CD14-positive monocyte (primary cell): ENCODE measurements at regions of chr16 and their contacts with region 1.

Region 1: GRCh38 chr16:2459647-2460390 is at the start of gene TEDC2:
- DNase-seq: peak; percentile 90 to 94 (median 91)
- H3K4me3 ChIP-seq: peak within 1 kb of the TSS; percentile 49 to 88 (median 60)
- H3K4me3 Mint-ChIP-seq: peak within 1 kb of the TSS; percentile 90 to 92
- H3K27ac ChIP-seq: no peak within 1 kb of the TSS
- H3K27ac Mint-ChIP-seq: peak within 1 kb of the TSS in 5 of 7 donors; percentile 65 to 91 (median 85)
- H3K4me1 ChIP-seq: peaks cover 13 to 32% of the 10 kb centered on the region in 2 donors
- H3K4me1 Mint-ChIP-seq: peaks cover 19% of the 10 kb centered on the region
- H3K27me3 ChIP-seq: no peaks in the 10 kb centered on the region
- H3K27me3 Mint-ChIP-seq: no peaks in the 10 kb centered on the region
- CTCF ChIP-seq: no peak
- polyA plus RNA-seq, gene TEDC2: 0.28 TPM in 1 of 3 donors, not detected in the others

Region 2: GRCh38 chr16:2429034-2429770 is 30.6 kb before region 1 on chr16 and contains the start of gene CCNF:
- intact Hi-C with region 1: loop called in 1 of 2 experiments (anchors 5 kb)
- DNase-seq: peak; percentile 92 to 95 (median 94)
- H3K4me3 ChIP-seq: peak within 1 kb of the TSS; percentile 74 to 94 (median 92)
- H3K4me3 Mint-ChIP-seq: peak within 1 kb of the TSS; percentile 84 to 94
- H3K27ac ChIP-seq: peak within 1 kb of the TSS in 1 of 2 donors; percentile 10
- H3K27ac Mint-ChIP-seq: peak within 1 kb of the TSS in 4 of 7 donors; percentile 17 to 68 (median 32)
- H3K4me1 ChIP-seq: peaks cover 20 to 28% of the 10 kb centered on the region in 2 donors
- H3K4me1 Mint-ChIP-seq: peaks cover 31% of the 10 kb centered on the region
- H3K27me3 ChIP-seq: no peaks in the 10 kb centered on the region
- H3K27me3 Mint-ChIP-seq: peaks cover 0 to 2% (median 0%) of the 10 kb centered on the region in 3 donors
- CTCF ChIP-seq: no peak
- polyA plus RNA-seq, gene CCNF: 0.34 to 0.97 (median 0.68) TPM

Region 3: GRCh38 chr16:2486645-2487516 is 27.1 kb after region 1 on chr16:
- intact Hi-C with region 1: no loop called
- DNase-seq: peak; percentile 79 to 88 (median 79)
- H3K4me3 ChIP-seq: peak overlapping the region in 1 of 3 experiments; percentile 10
- H3K4me3 Mint-ChIP-seq: peak overlapping the region; percentile 66 to 86
- H3K27ac ChIP-seq: peak overlapping the region; percentile 2 to 28
- H3K27ac Mint-ChIP-seq: peak overlapping the region; percentile 80 to 93 (median 90)
- H3K4me1 ChIP-seq: peaks cover 29 to 33% of the 10 kb centered on the region in 2 donors
- H3K4me1 Mint-ChIP-seq: peaks cover 44% of the 10 kb centered on the region
- H3K27me3 ChIP-seq: no peaks in the 10 kb centered on the region
- H3K27me3 Mint-ChIP-seq: peaks cover 2 to 4% (median 4%) of the 10 kb centered on the region in 3 donors
- CTCF ChIP-seq: peak; percentile 37

Region 4: GRCh38 chr16:2586241-2586640 is 126.4 kb after region 1 on chr16:
- intact Hi-C with region 1: no loop called
- DNase-seq: peak in 1 of 3 donors; percentile 3
- H3K4me3 ChIP-seq: no peak overlapping the region
- H3K4me3 Mint-ChIP-seq: no peak overlapping the region
- H3K27ac ChIP-seq: no peak overlapping the region
- H3K27ac Mint-ChIP-seq: no peak overlapping the region
- H3K4me1 ChIP-seq: no peaks in the 10 kb centered on the region
- H3K4me1 Mint-ChIP-seq: no peaks in the 10 kb centered on the region
- H3K27me3 ChIP-seq: no peaks in the 10 kb centered on the region
- H3K27me3 Mint-ChIP-seq: no peaks in the 10 kb centered on the region
- CTCF ChIP-seq: peak; percentile 40

Region 5: DNA sequence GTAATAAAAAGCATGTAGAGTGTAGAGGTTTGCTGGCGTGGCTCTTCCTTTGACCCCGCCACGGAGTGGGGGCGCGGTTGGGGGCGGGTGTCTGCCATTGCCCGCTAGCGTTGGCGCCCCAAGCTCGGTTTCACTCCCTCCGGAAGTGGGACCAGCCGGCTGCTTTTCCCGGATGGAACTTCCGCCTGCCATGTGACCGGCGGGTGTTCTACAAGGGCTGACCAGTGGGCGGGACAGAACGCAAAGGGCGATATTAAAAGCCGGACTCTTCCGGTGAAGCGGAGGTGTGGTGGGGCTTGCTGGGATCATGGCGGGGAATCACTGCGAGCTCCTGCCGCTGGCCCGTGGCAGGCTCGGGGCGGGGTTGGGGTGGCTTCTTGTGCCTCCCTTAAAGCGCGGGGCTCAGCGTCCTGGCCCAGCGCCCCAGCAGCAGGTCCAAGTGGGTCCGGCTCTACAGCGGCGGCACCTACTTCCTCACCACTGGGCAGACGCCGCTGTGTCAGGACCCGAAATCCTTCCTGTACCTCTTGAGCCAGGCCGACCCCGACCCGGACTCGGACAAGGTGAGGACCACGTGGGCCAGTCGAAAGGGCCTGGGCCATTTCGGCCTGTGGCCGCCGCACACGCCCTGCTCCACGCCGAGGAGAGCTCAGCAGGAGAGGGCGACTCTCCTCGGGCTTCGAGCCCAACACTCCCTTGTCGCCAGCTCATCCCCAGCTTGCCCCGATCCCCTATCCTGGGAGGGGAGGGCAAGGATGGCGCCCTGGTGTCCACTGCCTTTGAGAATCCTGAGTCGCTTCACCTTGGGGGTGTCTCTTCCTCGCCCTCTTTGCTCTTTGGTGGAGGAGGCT is 143.6 kb after region 1 on chr16:
- intact Hi-C with region 1: no loop called
- DNase-seq: peak; percentile 81 to 90 (median 87)
- H3K4me3 ChIP-seq: peak overlapping the region; percentile 59 to 85 (median 64)
- H3K4me3 Mint-ChIP-seq: peak overlapping the region; percentile 94 to 98
- H3K27ac ChIP-seq: peak overlapping the region; percentile 58 to 75
- H3K27ac Mint-ChIP-seq: peak overlapping the region; percentile 88 to 94 (median 90)
- H3K4me1 ChIP-seq: peaks cover 28 to 34% of the 10 kb centered on the region in 2 donors
- H3K4me1 Mint-ChIP-seq: peaks cover 22% of the 10 kb centered on the region
- H3K27me3 ChIP-seq: no peaks in the 10 kb centered on the region
- H3K27me3 Mint-ChIP-seq: no peaks in the 10 kb centered on the region
- CTCF ChIP-seq: no peak

Region 6: DNA sequence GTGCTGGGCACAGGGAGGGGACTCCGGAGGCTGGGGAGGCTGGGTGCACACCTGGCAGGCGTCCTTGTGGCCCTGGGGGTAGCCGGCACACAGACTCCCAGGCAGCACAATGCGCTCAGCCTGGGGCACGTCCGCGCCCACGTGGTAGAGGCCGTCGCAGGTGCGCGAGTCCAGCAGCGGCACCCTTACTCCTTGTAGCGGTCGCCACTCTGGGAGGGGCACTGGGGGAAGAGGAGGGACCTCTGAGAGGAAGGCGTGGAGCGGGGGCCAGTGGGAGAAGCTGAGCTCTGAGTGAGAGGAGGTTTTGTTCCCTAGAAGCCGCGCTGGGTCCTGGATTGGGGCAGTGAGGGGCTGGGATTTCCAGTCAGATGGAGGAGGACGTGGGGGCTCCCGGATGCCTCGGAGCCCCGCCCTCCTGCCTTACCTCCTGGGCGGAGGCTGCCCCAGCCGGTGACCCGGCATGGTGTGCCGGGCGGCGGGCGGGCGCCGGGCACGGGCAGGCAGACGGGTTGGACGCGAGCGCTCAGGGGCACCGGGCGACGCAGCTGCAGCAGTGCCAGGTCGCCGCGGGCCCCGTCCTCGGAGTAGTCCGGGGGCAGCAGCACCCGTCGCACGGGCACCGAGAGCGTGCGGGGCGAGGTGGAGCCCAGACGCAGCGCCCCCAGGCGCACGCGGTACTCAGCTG is 325.3 kb after region 1 on chr16:
- intact Hi-C with region 1: no loop called
- DNase-seq: peak in 2 of 3 donors; percentile 23 to 25
- H3K4me3 ChIP-seq: peak overlapping the region in 2 of 3 experiments; percentile 38 to 78
- H3K4me3 Mint-ChIP-seq: peak overlapping the region; percentile 77 to 91
- H3K27ac ChIP-seq: peak overlapping the region in 1 of 2 donors; percentile 31
- H3K27ac Mint-ChIP-seq: no peak overlapping the region
- H3K4me1 ChIP-seq: peaks cover 17 to 22% of the 10 kb centered on the region in 2 donors
- H3K4me1 Mint-ChIP-seq: peaks cover 19% of the 10 kb centered on the region
- H3K27me3 ChIP-seq: peaks cover 6 to 43% of the 10 kb centered on the region in 2 donors
- H3K27me3 Mint-ChIP-seq: peaks cover 33 to 68% (median 49%) of the 10 kb centered on the region in 3 donors
- CTCF ChIP-seq: no peak